Activated CD8-positive, alpha-beta T cell treated with anti-CD3 and anti-CD28 coated beads for 36 hours (primary cell): ENCODE measurements at regions of chrX and their contacts with region 1.

Region 1: DNA sequence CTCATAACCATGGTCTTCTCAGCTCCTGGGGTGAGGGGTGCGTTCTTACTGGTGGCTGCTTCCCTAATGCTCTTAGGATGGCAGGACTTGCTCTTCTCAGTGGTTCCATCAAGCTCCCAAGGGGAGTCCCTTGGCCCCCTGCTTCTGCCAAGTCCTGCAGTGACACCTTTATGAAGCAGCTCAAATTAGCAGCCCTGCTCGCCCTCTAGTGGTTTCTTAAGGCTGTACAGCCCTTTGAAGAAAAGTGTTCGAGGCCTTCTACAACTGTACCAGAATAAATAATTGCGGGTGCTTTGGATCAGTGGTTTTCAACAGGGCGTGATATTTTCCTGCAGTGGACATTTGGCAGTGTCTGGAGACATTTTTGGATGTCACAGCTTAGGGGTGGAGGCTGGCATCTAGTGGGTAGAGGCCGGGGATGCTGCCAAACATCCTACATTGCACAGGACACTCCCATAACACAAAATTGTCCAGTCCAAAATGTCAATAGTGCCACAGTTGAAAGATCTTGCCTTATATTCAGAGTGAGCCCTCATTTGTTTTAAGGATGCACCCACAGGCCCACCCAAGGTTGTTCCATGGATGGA is 204.7 kb upstream of the S100G start:
- DNase-seq: peak; percentile 44
- ATAC-seq: peak; percentile 64
- H3K4me3 Mint-ChIP-seq: no peak overlapping the region
- H3K27ac Mint-ChIP-seq: no peak overlapping the region
- H3K4me1 Mint-ChIP-seq: peaks cover 11% of the 10 kb centered on the region
- H3K27me3 Mint-ChIP-seq: no peaks in the 10 kb centered on the region
- CTCF ChIP-seq: peak; percentile 56

Region 2: GRCh38 chrX:16457239-16457638 is 12.0 kb after region 1 on chrX:
- CTCF ChIA-PET with region 1: no interaction called
- POLR2A ChIA-PET with region 1: no interaction called
- intact Hi-C with region 1: no loop called
- DNase-seq: no peak
- ATAC-seq: no peak
- H3K4me3 Mint-ChIP-seq: no peak overlapping the region
- H3K27ac Mint-ChIP-seq: no peak overlapping the region
- H3K4me1 Mint-ChIP-seq: no peaks in the 10 kb centered on the region
- H3K27me3 Mint-ChIP-seq: no peaks in the 10 kb centered on the region
- CTCF ChIP-seq: no peak

Region 3: DNA sequence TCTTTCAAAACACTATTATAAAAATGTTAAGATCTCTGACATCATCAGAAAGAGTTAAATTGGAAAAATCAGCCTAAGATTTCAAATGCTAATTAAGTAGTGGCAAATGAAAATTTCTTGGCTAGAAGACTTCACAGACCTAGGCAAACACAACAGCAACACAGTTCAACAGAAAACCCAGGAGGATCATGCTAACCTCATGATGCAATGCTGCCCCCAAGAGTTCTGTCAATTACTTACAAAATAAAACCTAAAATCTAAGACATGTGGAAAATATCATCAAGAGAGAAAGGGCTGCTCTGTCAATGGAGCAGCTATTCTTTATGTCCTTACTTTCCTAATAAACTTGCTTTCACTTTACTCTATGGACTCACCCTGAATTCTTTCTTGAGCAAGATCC is 225.7 kb after region 1 on chrX:
- CTCF ChIA-PET with region 1: interaction called, 6 read pairs
- POLR2A ChIA-PET with region 1: no interaction called
- intact Hi-C with region 1: loop called (anchors 10 kb)
- DNase-seq: peak; percentile 26
- ATAC-seq: no peak
- H3K4me3 Mint-ChIP-seq: no peak overlapping the region
- H3K27ac Mint-ChIP-seq: no peak overlapping the region
- H3K4me1 Mint-ChIP-seq: no peaks in the 10 kb centered on the region
- H3K27me3 Mint-ChIP-seq: no peaks in the 10 kb centered on the region
- CTCF ChIP-seq: peak; percentile 16